CD8-positive, alpha-beta memory T cell (primary cell): ENCODE measurements at regions of chr17 and their contacts with region 1.

Region 1: GRCh38 chr17:28788100-28788499 is 44.3 kb downstream of the TRAF4 start:
- DNase-seq: no peak
- H3K4me3 ChIP-seq: no peak overlapping the region
- H3K4me3 Mint-ChIP-seq: no peak overlapping the region
- H3K27ac ChIP-seq: no peak overlapping the region
- H3K27ac Mint-ChIP-seq: peak overlapping the region in 2 of 8 donors; percentile 50
- H3K4me1 ChIP-seq: no peaks in the 10 kb centered on the region
- H3K4me1 Mint-ChIP-seq: peaks cover 7 to 29% (median 12%) of the 10 kb centered on the region in 3 donors
- H3K27me3 ChIP-seq: no peaks in the 10 kb centered on the region
- H3K27me3 Mint-ChIP-seq: no peaks in the 10 kb centered on the region

Region 2: DNA sequence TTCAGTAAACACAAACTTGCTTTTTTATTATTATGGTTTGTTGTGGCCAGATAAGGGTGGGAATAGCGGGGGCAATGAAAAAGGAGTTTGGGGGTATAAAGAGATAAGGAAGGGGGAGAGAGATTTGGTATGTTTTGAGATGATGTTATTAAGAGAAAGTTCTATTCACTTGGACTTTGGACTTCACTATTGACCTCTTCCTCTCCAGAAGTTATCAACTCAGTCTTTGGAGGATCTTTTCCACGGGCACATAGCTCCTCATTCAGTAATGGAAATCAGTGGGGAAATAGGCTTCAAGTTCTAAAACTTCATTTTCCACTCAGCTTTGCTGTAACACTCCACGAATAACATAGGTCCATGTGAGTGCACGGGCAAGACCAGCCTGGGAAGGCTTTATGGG is 99.6 kb before region 1 on chr17:
- CTCF ChIA-PET with region 1: no interaction called
- POLR2A ChIA-PET with region 1: interaction called, 17 read pairs
- DNase-seq: no peak
- H3K4me3 ChIP-seq: no peak overlapping the region
- H3K4me3 Mint-ChIP-seq: no peak overlapping the region
- H3K27ac ChIP-seq: no peak overlapping the region
- H3K27ac Mint-ChIP-seq: peak overlapping the region in 2 of 8 donors; percentile 9 to 44
- H3K4me1 ChIP-seq: no peaks in the 10 kb centered on the region
- H3K4me1 Mint-ChIP-seq: no peaks in the 10 kb centered on the region
- H3K27me3 ChIP-seq: no peaks in the 10 kb centered on the region
- H3K27me3 Mint-ChIP-seq: no peaks in the 10 kb centered on the region

Region 3: DNA sequence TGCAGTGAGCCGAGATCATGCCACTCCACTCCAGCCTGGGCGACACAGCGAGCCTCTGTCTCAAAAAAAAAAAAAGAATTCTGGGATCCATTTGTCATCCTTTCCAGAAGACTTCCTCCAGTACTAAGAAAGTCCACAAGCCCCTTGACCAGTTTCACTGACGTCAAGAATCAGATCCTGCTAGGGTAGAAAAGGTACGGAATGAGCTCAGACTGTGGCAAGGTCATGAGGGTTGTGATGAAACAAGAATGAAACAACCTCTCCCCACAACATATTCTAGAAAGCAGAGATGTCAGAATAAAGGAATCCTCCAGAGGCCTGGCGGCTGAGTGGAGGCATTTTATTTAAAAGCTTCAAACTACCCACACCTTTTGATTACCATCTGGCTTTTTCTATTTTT is 14.4 kb before region 1 on chr17:
- CTCF ChIA-PET with region 1: no interaction called
- POLR2A ChIA-PET with region 1: no interaction called
- DNase-seq: no peak
- H3K4me3 ChIP-seq: no peak overlapping the region
- H3K4me3 Mint-ChIP-seq: no peak overlapping the region
- H3K27ac ChIP-seq: no peak overlapping the region
- H3K27ac Mint-ChIP-seq: peak overlapping the region in 1 of 8 donors; percentile 46
- H3K4me1 ChIP-seq: peaks cover 14% of the 10 kb centered on the region
- H3K4me1 Mint-ChIP-seq: peaks cover 19 to 34% (median 26%) of the 10 kb centered on the region in 3 donors
- H3K27me3 ChIP-seq: no peaks in the 10 kb centered on the region
- H3K27me3 Mint-ChIP-seq: no peaks in the 10 kb centered on the region